ENCODE measurements at regions of chr19 and their contacts with region 1.

Region 1: GRCh38 chr19:15466851-15467733 is 2.7 kb upstream of the RASAL3 start:
- DNase-seq: peak in 6 of 9 donors; percentile 17 to 58 (median 32)
- ATAC-seq: peak; percentile 42
- H3K4me3 ChIP-seq: peak overlapping the region; percentile 1
- H3K4me3 Mint-ChIP-seq: peak overlapping the region; percentile 63 to 95 (median 76)
- H3K27ac ChIP-seq: peak overlapping the region; percentile 52
- H3K27ac Mint-ChIP-seq: peak overlapping the region; percentile 85 to 95 (median 87)
- H3K4me1 ChIP-seq: peaks cover 43 to 47% of the 10 kb centered on the region in 2 donors
- H3K4me1 Mint-ChIP-seq: peaks cover 39 to 75% (median 53%) of the 10 kb centered on the region in 7 donors
- H3K27me3 ChIP-seq: no peaks in the 10 kb centered on the region
- H3K27me3 Mint-ChIP-seq: peaks cover 0 to 14% (median 0%) of the 10 kb centered on the region in 5 donors

Region 2: GRCh38 chr19:15332311-15332996 is 134.6 kb before region 1 on chr19 and contains the start of gene BRD4:
- CTCF ChIA-PET with region 1: no interaction called
- POLR2A ChIA-PET with region 1: interaction called, 7 read pairs
- intact Hi-C with region 1: loop called in 1 of 2 experiments (anchors 5 kb)
- DNase-seq: peak; percentile 67 to 90 (median 81)
- ATAC-seq: peak; percentile 82
- H3K4me3 ChIP-seq: peak within 1 kb of the TSS; percentile 91
- H3K4me3 Mint-ChIP-seq: peak within 1 kb of the TSS; percentile 93 to 99 (median 96)
- H3K27ac ChIP-seq: peak within 1 kb of the TSS; percentile 91
- H3K27ac Mint-ChIP-seq: peak within 1 kb of the TSS; percentile 85 to 96 (median 94)
- H3K4me1 ChIP-seq: peaks cover 28 to 29% of the 10 kb centered on the region in 2 donors
- H3K4me1 Mint-ChIP-seq: peaks cover 32 to 52% (median 47%) of the 10 kb centered on the region in 7 donors
- H3K27me3 ChIP-seq: no peaks in the 10 kb centered on the region
- H3K27me3 Mint-ChIP-seq: no peaks in the 10 kb centered on the region
- total RNA-seq, gene BRD4: 104 to 168 (median 128) TPM

Region 3: GRCh38 chr19:15432629-15433518 is 34.2 kb before region 1 on chr19:
- CTCF ChIA-PET with region 1: no interaction called
- POLR2A ChIA-PET with region 1: interaction called, 16 read pairs
- intact Hi-C with region 1: loop called (anchors 1 to 2 kb)
- DNase-seq: peak; percentile 87 to 95 (median 92)
- ATAC-seq: peak; percentile 99
- H3K4me3 ChIP-seq: peak overlapping the region; percentile 96
- H3K4me3 Mint-ChIP-seq: peak overlapping the region; percentile 86 to 99 (median 97)
- H3K27ac ChIP-seq: peak overlapping the region; percentile 90
- H3K27ac Mint-ChIP-seq: peak overlapping the region; percentile 85 to 98 (median 94)
- H3K4me1 ChIP-seq: peaks cover 15 to 26% of the 10 kb centered on the region in 2 donors
- H3K4me1 Mint-ChIP-seq: peaks cover 24 to 32% (median 29%) of the 10 kb centered on the region in 7 donors
- H3K27me3 ChIP-seq: no peaks in the 10 kb centered on the region
- H3K27me3 Mint-ChIP-seq: peaks cover 0 to 2% (median 0%) of the 10 kb centered on the region in 5 donors

Region 4: DNA sequence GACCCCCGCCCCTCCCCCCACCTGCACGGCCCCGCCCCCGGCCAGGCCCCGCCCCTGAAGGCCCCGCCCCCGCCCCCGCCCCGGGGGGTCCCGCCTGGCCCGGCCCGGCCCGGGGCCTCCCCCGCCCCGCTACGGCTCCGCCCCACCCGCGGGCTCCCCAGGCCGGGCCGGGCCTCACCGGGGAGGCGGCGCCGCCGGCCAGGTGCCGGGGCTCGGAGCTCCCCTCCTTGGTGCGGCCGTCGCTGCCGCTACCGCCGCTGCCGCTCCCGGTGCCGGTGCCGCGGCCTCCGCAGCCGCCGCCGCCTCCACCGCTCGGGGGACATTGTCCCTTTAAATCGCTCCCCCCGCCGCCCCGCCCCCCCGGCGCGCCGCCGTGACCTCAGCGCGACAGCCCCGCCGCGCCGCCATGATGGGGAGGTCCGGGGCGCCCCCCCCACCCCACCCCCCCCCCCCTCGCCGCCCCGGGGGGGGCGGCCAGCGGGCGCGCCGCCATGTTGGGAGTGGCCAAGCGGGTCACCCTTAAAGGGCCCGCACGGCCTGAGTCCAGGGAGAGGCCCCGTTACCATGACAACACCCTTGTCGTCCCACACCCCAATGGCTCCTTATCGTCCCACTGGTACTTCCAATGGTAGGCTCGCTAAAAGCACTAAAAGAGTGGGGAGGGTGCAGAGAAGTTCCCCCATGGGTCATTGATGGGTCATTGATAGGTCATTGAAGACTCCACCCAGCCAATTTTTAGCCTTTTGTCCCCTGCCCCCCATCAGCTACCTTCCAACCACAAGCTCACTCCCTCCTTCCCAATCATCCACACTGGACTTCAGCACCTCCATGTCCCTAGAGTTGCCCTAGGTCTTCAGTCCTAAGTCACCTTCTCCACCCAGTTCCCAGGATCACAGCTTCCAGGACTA is 17.2 kb before region 1 on chr19 and contains the start of gene WIZ:
- CTCF ChIA-PET with region 1: interaction called, 7 read pairs
- POLR2A ChIA-PET with region 1: interaction called, 101 read pairs
- intact Hi-C with region 1: loop called (anchors 1 to 2 kb)
- DNase-seq: peak; percentile 74 to 92 (median 86)
- ATAC-seq: peak; percentile 93
- H3K4me3 ChIP-seq: peak within 1 kb of the TSS; percentile 35
- H3K4me3 Mint-ChIP-seq: peak within 1 kb of the TSS; percentile 62 to 86 (median 82)
- H3K27ac ChIP-seq: peak within 1 kb of the TSS; percentile 72
- H3K27ac Mint-ChIP-seq: peak within 1 kb of the TSS; percentile 80 to 96 (median 91)
- H3K4me1 ChIP-seq: peaks cover 0 to 5% of the 10 kb centered on the region in 2 donors
- H3K4me1 Mint-ChIP-seq: peaks cover 5 to 32% (median 30%) of the 10 kb centered on the region in 7 donors
- H3K27me3 ChIP-seq: no peaks in the 10 kb centered on the region
- H3K27me3 Mint-ChIP-seq: no peaks in the 10 kb centered on the region
- total RNA-seq, gene WIZ: 20.1 to 34.9 (median 24.8) TPM

Region 5: GRCh38 chr19:15487038-15487437 is 19.9 kb after region 1 on chr19:
- CTCF ChIA-PET with region 1: no interaction called
- POLR2A ChIA-PET with region 1: interaction called, 3 read pairs
- intact Hi-C with region 1: loop called in 1 of 2 experiments (anchors 2 kb)
- DNase-seq: no peak
- ATAC-seq: no peak
- H3K4me3 ChIP-seq: no peak overlapping the region
- H3K4me3 Mint-ChIP-seq: no peak overlapping the region
- H3K27ac ChIP-seq: no peak overlapping the region
- H3K27ac Mint-ChIP-seq: no peak overlapping the region
- H3K4me1 ChIP-seq: no peaks in the 10 kb centered on the region
- H3K4me1 Mint-ChIP-seq: peaks cover 0 to 11% (median 7%) of the 10 kb centered on the region in 7 donors
- H3K27me3 ChIP-seq: no peaks in the 10 kb centered on the region
- H3K27me3 Mint-ChIP-seq: peaks cover 0 to 7% (median 0%) of the 10 kb centered on the region in 5 donors

Region 6: DNA sequence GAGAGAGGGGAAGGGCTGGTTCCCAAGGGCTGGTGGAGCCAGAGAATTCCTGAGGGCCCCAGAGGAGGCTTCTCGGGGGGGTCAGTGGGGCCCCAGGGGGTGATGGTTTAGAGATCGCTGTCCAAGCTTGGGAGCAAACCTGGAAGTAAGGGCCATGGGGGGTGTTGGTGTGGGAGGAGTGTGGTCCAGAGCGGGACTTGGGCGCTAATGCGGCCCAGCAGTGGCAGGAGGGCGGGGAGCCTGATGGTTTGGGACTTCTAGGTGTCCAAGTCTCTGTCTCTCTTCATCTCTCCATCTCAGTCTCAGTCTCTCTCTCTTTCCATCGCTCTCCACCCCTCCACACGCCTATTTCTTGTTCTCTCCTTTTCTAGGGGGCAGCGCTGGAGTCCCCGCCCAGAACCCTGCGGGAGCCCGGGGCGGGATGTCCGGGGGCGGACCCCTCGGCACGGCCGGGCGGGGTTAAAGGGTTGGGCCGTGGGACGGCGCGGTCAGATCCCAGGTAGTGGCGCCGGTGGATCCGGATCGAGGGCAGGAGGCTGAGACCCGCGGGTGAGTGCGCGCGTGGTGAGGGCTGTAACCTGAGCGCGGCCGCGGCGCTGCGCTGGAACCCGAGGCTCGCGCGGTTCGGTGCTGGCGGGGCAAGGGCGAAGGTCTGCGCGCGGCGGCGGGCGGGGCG is 41.1 kb after region 1 on chr19 and contains the start of gene CYP4F22:
- CTCF ChIA-PET with region 1: no interaction called
- POLR2A ChIA-PET with region 1: no interaction called
- intact Hi-C with region 1: loop called in 1 of 2 experiments (anchors 1 kb)
- DNase-seq: peak in 1 of 9 donors; percentile 30
- ATAC-seq: peak; percentile 18
- H3K4me3 ChIP-seq: peak within 1 kb of the TSS; percentile 44
- H3K4me3 Mint-ChIP-seq: peak within 1 kb of the TSS; percentile 75 to 84 (median 80)
- H3K27ac ChIP-seq: no peak within 1 kb of the TSS
- H3K27ac Mint-ChIP-seq: peak within 1 kb of the TSS in 1 of 9 donors; percentile 69
- H3K4me1 ChIP-seq: peaks cover 0 to 7% of the 10 kb centered on the region in 2 donors
- H3K4me1 Mint-ChIP-seq: peaks cover 9 to 22% (median 16%) of the 10 kb centered on the region in 7 donors
- H3K27me3 ChIP-seq: no peaks in the 10 kb centered on the region
- H3K27me3 Mint-ChIP-seq: peaks cover 0 to 48% (median 11%) of the 10 kb centered on the region in 5 donors
- total RNA-seq, gene CYP4F22: 0.24 to 3.6 (median 0.28) TPM in 4 of 5 experiments, not detected in the other

Region 7: DNA sequence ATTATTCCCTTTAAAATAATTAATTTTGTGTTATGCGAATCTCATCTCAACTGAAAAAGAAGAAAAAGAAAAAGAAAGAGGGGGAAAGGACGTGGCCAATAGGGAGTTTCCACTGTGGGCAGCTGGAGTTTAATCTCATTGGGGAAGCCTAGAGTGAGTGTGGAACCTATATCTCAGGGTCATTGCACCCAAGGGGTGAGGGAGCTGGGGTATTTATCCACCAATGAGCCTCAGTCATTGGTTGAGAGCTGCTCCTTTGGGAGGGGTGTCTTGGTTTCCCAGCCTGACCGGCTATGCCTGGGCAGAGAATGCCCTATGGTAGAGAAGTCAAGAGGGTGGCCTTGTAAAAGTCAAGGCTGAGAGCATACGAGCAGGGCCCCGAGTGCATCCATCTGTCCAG is 57.7 kb after region 1 on chr19:
- CTCF ChIA-PET with region 1: no interaction called
- POLR2A ChIA-PET with region 1: interaction called, 5 read pairs
- intact Hi-C with region 1: loop called in 1 of 2 experiments (anchors 5 kb)
- DNase-seq: no peak
- ATAC-seq: no peak
- H3K4me3 ChIP-seq: no peak overlapping the region
- H3K4me3 Mint-ChIP-seq: no peak overlapping the region
- H3K27ac ChIP-seq: no peak overlapping the region
- H3K27ac Mint-ChIP-seq: no peak overlapping the region
- H3K4me1 ChIP-seq: no peaks in the 10 kb centered on the region
- H3K4me1 Mint-ChIP-seq: peaks cover 0 to 2% (median 0%) of the 10 kb centered on the region in 7 donors
- H3K27me3 ChIP-seq: no peaks in the 10 kb centered on the region
- H3K27me3 Mint-ChIP-seq: peaks cover 0 to 6% (median 0%) of the 10 kb centered on the region in 5 donors

Measured in naive thymus-derived CD4-positive, alpha-beta T cell (primary cell).